Activated CD8-positive, alpha-beta T cell treated with anti-CD3 and anti-CD28 coated beads, Interleukin-2, amount 10 ng/mL, durations not matched to agents 7 days and 5 days (primary cell): ENCODE measurements at regions of chr9 and their contacts with region 1.

Region 1: DNA sequence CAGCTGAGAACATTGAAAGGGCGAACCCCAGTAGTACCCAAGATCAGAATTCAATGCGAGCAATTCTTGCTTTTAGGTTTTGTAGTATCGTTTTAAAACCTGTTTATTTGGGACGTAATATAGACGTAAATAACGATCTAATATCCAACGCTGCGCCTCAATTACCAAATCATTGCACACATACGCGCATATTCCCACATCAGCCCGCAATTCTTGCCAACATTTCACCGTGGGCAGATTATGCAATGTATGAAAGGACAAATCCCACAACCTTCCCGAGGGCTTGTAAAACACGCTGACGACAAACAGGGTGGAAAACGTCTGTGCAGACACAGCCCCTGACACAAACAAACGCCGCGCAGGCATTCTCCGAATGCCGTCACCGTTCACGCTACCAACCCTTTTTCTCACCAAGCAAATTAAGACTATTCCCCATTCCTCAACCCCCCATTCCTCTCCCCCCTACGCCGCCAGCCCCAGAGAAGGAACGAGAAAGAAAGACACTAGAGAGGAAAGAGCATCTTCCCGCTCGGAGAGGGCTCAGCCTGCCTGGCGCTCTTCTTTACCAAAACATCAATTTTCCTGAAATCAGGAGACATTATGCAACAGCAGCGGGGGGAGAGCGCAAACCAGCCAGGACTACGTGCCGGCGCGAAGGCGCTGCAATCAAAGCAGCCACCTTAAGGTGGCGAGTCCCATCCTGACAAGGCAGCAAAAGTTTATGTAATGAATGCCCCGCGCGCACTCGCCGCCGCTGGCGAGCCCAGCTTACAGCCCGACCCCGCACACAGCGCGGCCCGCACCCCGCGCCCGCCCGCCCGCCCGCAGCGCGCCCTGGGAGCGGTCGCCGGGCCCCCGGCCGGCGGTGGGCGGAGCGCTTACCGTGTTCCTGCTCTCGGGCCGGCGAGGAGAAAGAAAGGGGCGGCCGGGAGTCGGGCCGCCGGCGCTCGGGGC is 597 bp downstream of the NFIL3 start:
- DNase-seq: peak; percentile 77
- ATAC-seq: peak; percentile 44
- H3K4me3 Mint-ChIP-seq: peak overlapping the region; percentile 96
- H3K27ac Mint-ChIP-seq: peak overlapping the region; percentile 89
- H3K4me1 Mint-ChIP-seq: peaks cover 62% of the 10 kb centered on the region
- H3K27me3 Mint-ChIP-seq: no peaks in the 10 kb centered on the region

Region 2: DNA sequence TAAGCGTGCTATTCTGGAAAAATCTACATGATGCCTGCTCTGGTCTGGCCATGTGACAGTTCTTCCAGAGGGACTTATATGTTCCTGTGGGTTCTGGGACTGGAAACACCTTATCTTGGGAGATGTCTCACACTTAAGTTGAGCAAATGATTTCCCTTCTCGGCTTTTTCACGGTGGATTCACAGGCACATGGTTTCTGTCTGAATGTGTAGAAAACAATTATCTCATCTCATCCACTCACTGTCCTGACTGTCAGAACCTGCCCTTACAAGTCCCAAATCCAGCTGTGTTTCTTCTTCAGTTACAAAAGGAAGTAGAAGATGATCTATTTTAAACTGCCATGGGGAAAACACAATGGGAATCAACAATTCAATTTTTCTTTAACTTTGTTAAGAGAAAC is 437.4 kb before region 1 on chr9:
- CTCF ChIA-PET with region 1: interaction called, 11 read pairs
- POLR2A ChIA-PET with region 1: no interaction called
- DNase-seq: no peak
- ATAC-seq: no peak
- H3K4me3 Mint-ChIP-seq: no peak overlapping the region
- H3K27ac Mint-ChIP-seq: no peak overlapping the region
- H3K4me1 Mint-ChIP-seq: no peaks in the 10 kb centered on the region
- H3K27me3 Mint-ChIP-seq: peaks cover 7% of the 10 kb centered on the region

Region 3: GRCh38 chr9:91089405-91090129 is 333.5 kb before region 1 on chr9:
- CTCF ChIA-PET with region 1: interaction called, 16 read pairs
- POLR2A ChIA-PET with region 1: no interaction called
- DNase-seq: peak; percentile 54
- ATAC-seq: no peak
- H3K4me3 Mint-ChIP-seq: no peak overlapping the region
- H3K27ac Mint-ChIP-seq: peak overlapping the region; percentile 48
- H3K4me1 Mint-ChIP-seq: peaks cover 38% of the 10 kb centered on the region
- H3K27me3 Mint-ChIP-seq: no peaks in the 10 kb centered on the region

Region 4: DNA sequence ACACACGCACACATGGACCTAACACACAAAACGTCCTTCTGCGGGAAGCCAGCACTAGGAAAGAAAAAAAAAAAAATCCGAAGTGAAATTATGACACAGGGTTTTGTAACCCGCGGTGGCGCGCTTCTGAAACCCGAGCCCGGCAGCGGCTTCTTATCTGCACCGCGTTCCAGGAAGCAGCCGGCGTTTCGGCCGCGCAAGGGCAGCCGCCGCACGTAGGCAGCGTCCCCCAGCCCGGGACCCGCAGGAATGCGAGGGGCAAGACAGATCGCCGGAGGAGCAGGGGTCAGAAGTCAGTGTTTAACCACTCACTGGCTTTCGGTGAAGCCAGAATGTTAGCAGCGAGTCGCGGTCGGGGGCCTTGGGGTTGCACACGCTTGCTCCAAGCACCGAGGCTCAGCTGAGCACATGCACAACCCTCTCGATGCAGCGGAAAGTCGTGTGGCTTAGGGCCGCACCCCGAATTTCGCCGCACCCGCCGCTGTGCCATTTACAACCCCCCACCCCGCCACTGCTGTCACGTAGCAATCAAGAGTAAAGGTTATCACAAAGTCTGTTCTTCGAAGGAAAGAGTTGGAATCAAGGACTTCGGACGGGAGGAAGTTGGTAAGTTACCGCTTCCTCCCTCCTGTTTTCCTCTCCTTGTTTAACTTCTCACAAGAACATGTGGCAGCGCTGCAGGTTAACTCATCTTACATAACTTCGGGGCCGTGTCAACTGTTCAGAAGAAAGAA is 229.2 kb before region 1 on chr9:
- CTCF ChIA-PET with region 1: interaction called, 4 read pairs
- POLR2A ChIA-PET with region 1: interaction called, 12 read pairs
- DNase-seq: peak; percentile 93
- ATAC-seq: peak; percentile 79
- H3K4me3 Mint-ChIP-seq: peak overlapping the region; percentile 70
- H3K27ac Mint-ChIP-seq: peak overlapping the region; percentile 95
- H3K4me1 Mint-ChIP-seq: peaks cover 85% of the 10 kb centered on the region
- H3K27me3 Mint-ChIP-seq: no peaks in the 10 kb centered on the region

Region 5: DNA sequence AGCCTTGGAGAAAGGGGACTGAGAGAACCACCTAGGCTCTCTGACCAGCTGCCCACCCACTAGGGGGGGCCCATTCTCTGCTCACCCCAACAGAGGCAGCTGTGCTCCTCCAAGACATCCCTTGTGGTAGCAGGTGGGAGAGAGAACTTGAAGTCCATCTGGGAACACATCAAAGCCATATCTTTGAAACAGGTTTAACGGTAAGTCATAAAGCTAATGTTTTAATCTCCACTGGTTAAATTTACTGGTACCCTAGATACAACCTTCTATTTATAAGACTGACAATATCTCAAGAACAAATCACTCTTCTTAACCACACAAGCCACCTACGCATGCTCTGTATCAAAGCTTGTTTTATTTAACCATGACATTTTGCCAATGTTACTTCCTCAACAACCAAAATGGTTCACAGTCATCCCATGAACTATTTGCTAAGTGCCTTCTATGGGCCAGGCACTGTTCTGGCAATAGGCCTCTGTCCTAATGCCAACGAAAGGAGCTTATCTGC is 81.7 kb before region 1 on chr9:
- CTCF ChIA-PET with region 1: interaction called, 12 read pairs
- POLR2A ChIA-PET with region 1: interaction called, 3 read pairs
- DNase-seq: no peak
- ATAC-seq: peak; percentile 23
- H3K4me3 Mint-ChIP-seq: no peak overlapping the region
- H3K27ac Mint-ChIP-seq: no peak overlapping the region
- H3K4me1 Mint-ChIP-seq: peaks cover 30% of the 10 kb centered on the region
- H3K27me3 Mint-ChIP-seq: no peaks in the 10 kb centered on the region

Region 6: DNA sequence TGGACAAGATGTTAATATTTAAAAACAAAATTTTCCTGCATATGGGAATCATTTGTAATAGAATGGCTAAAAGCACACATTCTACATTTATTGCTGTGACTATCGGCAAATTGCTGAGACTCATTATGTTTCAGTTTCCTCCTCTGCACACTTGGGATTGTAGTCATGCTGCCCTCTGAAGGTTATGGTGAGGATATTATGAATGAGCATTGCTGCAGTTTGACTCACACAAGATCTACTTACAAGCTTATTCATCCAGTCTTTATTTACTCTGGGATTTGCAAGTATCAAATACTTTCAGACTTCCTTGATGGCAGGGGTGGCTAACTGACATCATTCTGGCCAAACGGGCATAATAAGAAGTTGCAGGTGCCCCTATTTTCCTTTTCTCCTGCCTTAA is 10.1 kb after region 1 on chr9:
- CTCF ChIA-PET with region 1: interaction called, 14 read pairs
- POLR2A ChIA-PET with region 1: interaction called, 4 read pairs
- DNase-seq: no peak
- ATAC-seq: peak; percentile 75
- H3K4me3 Mint-ChIP-seq: no peak overlapping the region
- H3K27ac Mint-ChIP-seq: no peak overlapping the region
- H3K4me1 Mint-ChIP-seq: peaks cover 9% of the 10 kb centered on the region
- H3K27me3 Mint-ChIP-seq: peaks cover 25% of the 10 kb centered on the region